ENCODE measurements at regions of chr14 and their contacts with region 1.

Region 1: GRCh38 chr14:55438066-55438683 is 2.2 kb downstream of the TBPL2 start:
- DNase-seq: peak; percentile 42
- H3K4me3 ChIP-seq: no peak overlapping the region
- H3K27ac ChIP-seq: no peak overlapping the region
- H3K4me1 ChIP-seq: no peaks in the 10 kb centered on the region
- H3K27me3 ChIP-seq: no peaks in the 10 kb centered on the region
- CTCF ChIP-seq: peak; percentile 67 to 70

Region 2: GRCh38 chr14:55661029-55661428 is 222.9 kb after region 1 on chr14:
- CTCF ChIA-PET with region 1: interaction called, 16 read pairs
- dilution Hi-C with region 1: no loop called
- in situ Hi-C with region 1: no loop called
- intact Hi-C with region 1: no loop called
- DNase-seq: no peak
- H3K4me3 ChIP-seq: no peak overlapping the region
- H3K27ac ChIP-seq: no peak overlapping the region
- H3K4me1 ChIP-seq: no peaks in the 10 kb centered on the region
- H3K27me3 ChIP-seq: no peaks in the 10 kb centered on the region
- CTCF ChIP-seq: no peak

Region 3: DNA sequence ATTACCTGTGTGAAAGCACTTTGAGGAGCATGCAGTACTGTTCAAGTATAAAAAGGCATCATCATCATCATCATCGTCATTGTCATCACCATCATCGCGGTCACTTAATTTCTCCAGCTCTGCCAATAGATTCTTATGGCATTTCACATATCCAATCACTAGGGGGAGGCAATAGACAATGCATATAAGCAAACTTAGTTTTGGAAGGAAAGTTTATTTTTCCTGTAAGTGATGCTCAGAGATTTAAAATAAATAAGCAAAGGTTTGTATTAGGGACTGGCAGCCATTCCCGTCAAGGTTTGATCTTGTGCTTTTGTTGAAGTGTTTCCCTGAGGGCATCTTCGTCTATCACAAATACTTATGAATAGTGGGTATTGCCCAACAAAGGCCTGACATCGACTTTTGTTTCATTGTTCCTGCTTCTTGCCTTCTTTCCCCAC is 269.2 kb after region 1 on chr14:
- CTCF ChIA-PET with region 1: no interaction called
- dilution Hi-C with region 1: no loop called
- in situ Hi-C with region 1: no loop called
- intact Hi-C with region 1: loop called (anchors 1 kb)
- DNase-seq: peak; percentile 47
- H3K4me3 ChIP-seq: no peak overlapping the region
- H3K27ac ChIP-seq: no peak overlapping the region
- H3K4me1 ChIP-seq: peaks cover 18% of the 10 kb centered on the region
- H3K27me3 ChIP-seq: no peaks in the 10 kb centered on the region
- CTCF ChIP-seq: peak; percentile 69 to 73